T-cell (primary cell): ENCODE measurements at regions of chr9 and their contacts with region 1.

Region 1: DNA sequence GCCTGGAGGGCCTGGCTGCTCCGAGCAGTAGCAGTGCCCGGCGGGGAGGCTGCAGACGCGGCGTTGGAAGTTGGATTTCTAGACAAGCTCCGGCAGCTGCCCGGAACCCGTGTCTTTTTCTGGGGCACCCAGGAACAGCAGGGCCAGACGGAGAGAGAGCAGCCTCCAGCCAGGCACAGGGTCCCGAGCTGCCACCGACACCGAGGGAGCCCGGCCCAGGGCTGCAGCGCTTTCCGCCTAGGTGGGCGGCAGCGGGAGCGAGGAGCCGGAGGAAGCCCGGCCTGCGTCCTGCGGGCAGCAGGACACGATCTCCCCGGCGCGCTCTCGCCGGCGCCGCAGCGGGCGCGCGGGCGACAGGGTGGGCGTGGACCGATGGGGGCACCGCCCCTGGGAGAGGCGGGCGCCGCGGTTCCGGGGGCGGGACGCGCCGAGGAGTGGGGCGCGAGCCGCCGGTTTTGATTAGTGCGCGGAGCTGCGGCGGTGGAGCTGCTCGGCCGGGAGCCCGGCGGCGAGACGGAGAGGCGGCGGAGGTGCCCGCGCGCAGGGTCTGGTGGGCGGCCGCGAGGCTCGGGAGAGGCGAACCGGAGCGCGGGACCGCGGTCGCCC is at the start of gene UGCG:
- DNase-seq: peak; percentile 68 to 92 (median 83)
- ATAC-seq: peak; percentile 91 to 94 (median 93)
- H3K4me3 ChIP-seq: peak within 1 kb of the TSS; percentile 89 to 95
- H3K4me3 Mint-ChIP-seq: peak within 1 kb of the TSS in 2 of 3 donors; percentile 90 to 92
- H3K27ac ChIP-seq: peak within 1 kb of the TSS; percentile 69
- H3K27ac Mint-ChIP-seq: peak within 1 kb of the TSS; percentile 94 to 95
- H3K4me1 ChIP-seq: peaks cover 25 to 32% of the 10 kb centered on the region in 2 experiments
- H3K4me1 Mint-ChIP-seq: peaks cover 15 to 29% (median 22%) of the 10 kb centered on the region in 3 donors
- H3K27me3 ChIP-seq: no peaks in the 10 kb centered on the region
- H3K27me3 Mint-ChIP-seq: no peaks in the 10 kb centered on the region
- total RNA-seq, gene UGCG: 20.1 to 41.6 (median 24.1) TPM

Region 2: DNA sequence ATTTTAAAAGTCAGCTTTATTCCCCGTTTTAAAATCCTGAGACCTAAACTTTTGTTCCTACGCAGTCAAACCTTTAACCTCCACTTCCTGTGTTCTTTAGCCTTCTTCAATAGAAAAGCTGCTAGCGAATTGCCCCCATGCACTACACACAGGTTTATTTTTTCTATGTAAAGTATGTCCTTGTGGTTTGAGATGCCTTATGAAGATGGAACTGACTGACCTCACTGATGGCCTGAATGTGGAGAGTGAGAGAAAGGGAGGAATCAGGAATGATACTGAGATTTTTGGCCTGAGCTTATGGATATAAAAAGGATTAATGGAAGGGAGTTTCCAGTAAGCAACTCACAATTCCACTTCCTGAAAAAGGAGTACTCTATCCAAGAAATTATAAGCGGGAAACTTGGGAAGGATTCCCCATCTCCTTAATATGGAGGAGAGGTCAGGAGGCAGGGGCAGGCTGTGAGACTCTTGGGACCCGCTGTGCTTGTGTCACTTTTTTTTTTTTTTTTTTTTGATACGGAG is 89.6 kb after region 1 on chr9:
- CTCF ChIA-PET with region 1: interaction called, 3 to 6 read pairs
- POLR2A ChIA-PET with region 1: interaction called in 1 of 2 experiments, 14 read pairs
- DNase-seq: peak in 1 of 35 experiments; percentile 16
- ATAC-seq: peak in 1 of 4 experiments; percentile 45
- H3K4me3 ChIP-seq: no peak overlapping the region
- H3K4me3 Mint-ChIP-seq: peak overlapping the region in 1 of 3 donors; percentile 66
- H3K27ac ChIP-seq: no peak overlapping the region
- H3K27ac Mint-ChIP-seq: peak overlapping the region in 1 of 2 donors; percentile 71
- H3K4me1 ChIP-seq: peaks cover 11 to 35% of the 10 kb centered on the region in 2 experiments
- H3K4me1 Mint-ChIP-seq: peaks cover 38 to 45% (median 44%) of the 10 kb centered on the region in 3 donors
- H3K27me3 ChIP-seq: no peaks in the 10 kb centered on the region
- H3K27me3 Mint-ChIP-seq: no peaks in the 10 kb centered on the region

Region 3: DNA sequence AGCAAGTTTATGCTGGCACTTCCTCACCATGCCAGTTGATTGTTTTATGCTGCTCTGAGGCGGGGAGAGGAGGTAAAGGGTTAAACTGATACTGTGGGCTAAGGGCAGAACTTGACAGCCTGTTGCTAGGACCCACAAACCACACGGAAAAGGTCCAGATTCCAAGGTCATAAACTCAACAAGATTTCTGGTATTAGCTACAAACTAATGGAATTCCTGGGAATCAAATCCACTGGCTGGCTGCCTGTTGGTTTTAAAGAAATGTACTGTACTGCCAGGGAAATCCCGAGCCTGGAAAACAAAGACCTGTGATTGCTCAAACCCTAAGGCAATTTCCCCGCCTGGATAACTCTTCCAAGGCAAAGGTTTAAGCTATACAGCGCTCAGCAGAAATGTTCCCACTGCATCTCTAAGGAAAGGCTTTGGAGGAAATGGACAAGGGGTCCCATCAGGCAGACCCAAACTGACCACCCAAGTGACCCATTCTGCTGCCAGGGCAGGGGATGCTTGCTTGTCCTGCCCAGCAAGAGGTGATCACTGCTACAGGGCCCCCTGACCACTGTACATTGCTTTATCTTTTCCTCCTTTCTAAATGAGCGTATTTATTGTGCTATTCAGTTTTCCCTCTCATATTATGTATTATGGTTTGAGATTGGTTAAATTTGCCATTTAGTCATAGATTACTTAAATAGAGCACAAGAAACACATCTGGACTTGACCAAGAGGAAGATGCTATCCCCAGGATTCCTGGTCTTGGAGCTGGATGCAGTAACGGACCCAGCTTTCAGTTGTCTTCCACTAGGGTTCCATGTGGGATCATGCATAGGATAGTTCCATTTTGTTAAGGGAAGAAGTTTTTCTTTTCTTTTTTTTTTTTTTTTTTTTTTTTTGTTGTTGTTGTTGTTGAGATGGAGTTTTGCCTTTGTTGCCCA is 154.4 kb after region 1 on chr9:
- CTCF ChIA-PET with region 1: no interaction called
- POLR2A ChIA-PET with region 1: no interaction called
- DNase-seq: no peak
- ATAC-seq: no peak
- H3K4me3 ChIP-seq: no peak overlapping the region
- H3K4me3 Mint-ChIP-seq: no peak overlapping the region
- H3K27ac ChIP-seq: no peak overlapping the region
- H3K27ac Mint-ChIP-seq: no peak overlapping the region
- H3K4me1 ChIP-seq: no peaks in the 10 kb centered on the region
- H3K4me1 Mint-ChIP-seq: peaks cover 8 to 11% (median 11%) of the 10 kb centered on the region in 3 donors
- H3K27me3 ChIP-seq: no peaks in the 10 kb centered on the region
- H3K27me3 Mint-ChIP-seq: no peaks in the 10 kb centered on the region

Region 4: DNA sequence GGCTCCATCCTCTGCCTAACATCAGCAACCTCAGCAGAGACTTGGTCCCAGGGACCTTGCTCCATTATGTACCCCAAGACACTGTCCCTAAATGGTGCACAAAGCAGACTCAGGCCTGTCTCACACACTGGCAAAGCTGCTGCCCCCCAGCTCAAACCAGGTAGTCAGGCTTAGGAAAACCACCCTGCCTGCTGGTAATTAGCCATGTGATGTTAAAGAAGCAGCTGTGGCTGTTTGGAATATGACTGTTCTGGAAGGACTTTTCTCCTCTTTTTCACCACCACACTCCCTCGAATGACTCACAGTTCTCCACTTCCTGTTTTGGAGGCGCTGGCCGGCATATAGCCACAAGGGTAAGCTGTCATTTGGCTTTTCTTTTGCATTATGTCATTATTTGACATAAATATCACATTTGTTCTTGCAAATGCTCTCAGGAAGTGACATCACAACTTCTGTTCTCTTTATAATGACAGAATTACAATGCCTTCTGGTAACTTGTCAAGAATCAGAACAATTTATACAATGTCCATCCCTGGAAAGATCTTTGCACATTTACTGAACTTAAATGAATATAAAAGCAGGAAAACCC is 164.8 kb after region 1 on chr9:
- CTCF ChIA-PET with region 1: no interaction called
- POLR2A ChIA-PET with region 1: no interaction called
- DNase-seq: peak in 16 of 35 experiments; percentile 4 to 32 (median 8)
- ATAC-seq: peak in 2 of 4 experiments; percentile 57 to 73
- H3K4me3 ChIP-seq: no peak overlapping the region
- H3K4me3 Mint-ChIP-seq: no peak overlapping the region
- H3K27ac ChIP-seq: no peak overlapping the region
- H3K27ac Mint-ChIP-seq: peak overlapping the region in 1 of 2 donors; percentile 48
- H3K4me1 ChIP-seq: peaks cover 6 to 7% of the 10 kb centered on the region in 2 experiments
- H3K4me1 Mint-ChIP-seq: peaks cover 21 to 28% (median 21%) of the 10 kb centered on the region in 3 donors
- H3K27me3 ChIP-seq: no peaks in the 10 kb centered on the region
- H3K27me3 Mint-ChIP-seq: no peaks in the 10 kb centered on the region

Region 5: DNA sequence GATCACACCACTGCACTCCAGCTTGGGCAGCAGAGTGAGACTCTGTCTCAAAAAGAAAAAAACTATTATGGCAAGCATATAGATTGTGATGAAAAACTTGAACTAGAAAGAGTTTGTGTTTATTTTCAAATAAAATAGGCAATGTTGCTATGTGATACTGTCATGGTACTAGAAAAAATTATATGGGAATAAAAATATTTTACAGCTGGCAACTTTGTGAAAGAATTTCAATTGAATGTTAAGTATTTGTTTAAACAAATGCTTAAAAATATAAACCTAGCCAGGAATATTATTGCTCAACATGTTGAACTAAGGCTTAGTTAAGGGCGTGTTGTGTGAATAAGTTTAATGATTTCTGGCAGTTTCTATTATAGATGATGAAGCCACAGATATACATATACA is 515.2 kb after region 1 on chr9:
- CTCF ChIA-PET with region 1: no interaction called
- POLR2A ChIA-PET with region 1: no interaction called
- DNase-seq: no peak
- ATAC-seq: no peak
- H3K4me3 ChIP-seq: no peak overlapping the region
- H3K4me3 Mint-ChIP-seq: no peak overlapping the region
- H3K27ac ChIP-seq: no peak overlapping the region
- H3K27ac Mint-ChIP-seq: no peak overlapping the region
- H3K4me1 ChIP-seq: no peaks in the 10 kb centered on the region
- H3K4me1 Mint-ChIP-seq: no peaks in the 10 kb centered on the region
- H3K27me3 ChIP-seq: no peaks in the 10 kb centered on the region
- H3K27me3 Mint-ChIP-seq: no peaks in the 10 kb centered on the region